ENCODE measurements at regions of chr19 and their contacts with region 1.

Region 1: DNA sequence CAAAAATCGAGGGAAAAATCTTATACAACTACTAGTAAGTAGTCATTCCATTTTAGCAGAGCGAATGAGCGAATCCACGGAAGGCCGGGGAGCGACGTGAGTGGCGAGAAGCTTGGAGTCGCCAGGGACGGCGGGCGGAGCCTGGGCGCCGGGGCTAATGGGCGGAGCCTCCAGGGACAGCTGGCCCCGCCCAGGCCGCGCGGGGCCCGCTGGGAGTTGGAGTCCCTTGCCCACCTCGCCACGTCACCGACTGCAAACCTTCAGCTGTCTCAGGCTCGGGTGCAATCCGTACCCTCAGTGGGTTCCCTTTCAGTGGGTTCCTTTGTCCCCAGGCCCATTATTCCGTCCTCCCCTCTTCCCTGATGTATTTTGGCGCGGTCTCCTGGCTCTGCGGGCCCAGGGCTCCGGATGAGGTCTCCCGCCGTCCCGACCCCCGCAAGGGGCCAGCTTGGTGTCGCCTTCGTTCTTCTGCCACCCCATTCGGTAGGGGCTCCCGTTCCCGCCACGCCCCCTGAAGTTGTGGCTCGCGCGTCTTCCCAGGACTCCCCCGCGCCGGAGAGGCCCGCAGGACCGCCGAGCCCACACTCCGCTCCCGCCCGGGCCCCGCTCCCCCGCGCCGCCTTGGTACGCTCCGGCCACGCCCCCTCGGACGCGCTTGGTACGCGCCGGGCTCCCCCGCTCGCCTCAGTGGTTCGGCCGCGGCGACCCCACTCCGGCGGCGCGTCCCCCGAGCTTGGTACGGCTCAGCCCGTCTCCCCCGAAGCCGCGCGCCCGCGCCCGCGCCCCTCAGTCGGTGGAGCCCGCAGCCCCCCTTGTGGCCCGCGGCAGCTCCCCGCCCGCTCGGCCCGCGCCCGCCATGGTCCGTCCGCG is at the start of gene PTOV1:
- DNase-seq: peak; percentile 73 to 94 (median 86)
- ATAC-seq: peak; percentile 87
- H3K4me3 ChIP-seq: peak within 1 kb of the TSS; percentile 98 to 99
- H3K4me3 Mint-ChIP-seq: peak within 1 kb of the TSS; percentile 93
- H3K27ac ChIP-seq: peak within 1 kb of the TSS; percentile 96 to 99
- H3K27ac Mint-ChIP-seq: peak within 1 kb of the TSS; percentile 96
- H3K4me1 ChIP-seq: peaks cover 30% of the 10 kb centered on the region
- H3K4me1 Mint-ChIP-seq: peaks cover 35% of the 10 kb centered on the region
- H3K27me3 ChIP-seq: no peaks in the 10 kb centered on the region
- H3K27me3 Mint-ChIP-seq: no peaks in the 10 kb centered on the region
- CTCF ChIP-seq: no peak
- total RNA-seq, gene PTOV1: 112 to 116 TPM

Region 2: DNA sequence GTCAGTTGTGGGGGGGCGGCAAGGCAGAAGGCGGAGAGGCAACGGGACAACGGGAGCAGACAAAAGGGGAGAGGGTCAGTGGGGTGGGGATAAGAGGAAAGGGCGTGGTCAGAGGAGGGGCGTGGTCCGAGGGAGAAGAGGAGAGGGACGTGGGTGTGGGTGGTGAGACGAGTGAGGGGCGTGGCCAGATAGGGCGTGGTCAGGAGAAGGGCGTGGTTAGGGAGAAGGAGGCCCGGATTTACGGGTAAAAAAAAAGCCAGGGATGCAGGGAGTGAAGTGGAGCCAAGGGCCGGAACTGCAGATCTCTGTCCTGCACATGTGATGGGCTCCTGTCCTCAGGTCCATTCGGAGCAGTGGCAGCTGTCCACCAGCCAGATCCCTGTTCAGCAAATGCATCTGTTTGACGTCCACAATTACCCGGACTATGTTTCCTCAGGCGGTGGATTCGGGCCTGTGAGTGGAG is 138.3 kb before region 1 on chr19:
- CTCF ChIA-PET with region 1: no interaction called
- POLR2A ChIA-PET with region 1: interaction called, 4 read pairs
- intact Hi-C with region 1: loop called (anchors 1 kb)
- DNase-seq: no peak
- ATAC-seq: no peak
- H3K4me3 ChIP-seq: no peak overlapping the region
- H3K4me3 Mint-ChIP-seq: no peak overlapping the region
- H3K27ac ChIP-seq: no peak overlapping the region
- H3K27ac Mint-ChIP-seq: no peak overlapping the region
- H3K4me1 ChIP-seq: peaks cover 4% of the 10 kb centered on the region
- H3K4me1 Mint-ChIP-seq: peaks cover 3% of the 10 kb centered on the region
- H3K27me3 ChIP-seq: no peaks in the 10 kb centered on the region
- H3K27me3 Mint-ChIP-seq: peaks cover 3% of the 10 kb centered on the region
- CTCF ChIP-seq: no peak

Region 3: DNA sequence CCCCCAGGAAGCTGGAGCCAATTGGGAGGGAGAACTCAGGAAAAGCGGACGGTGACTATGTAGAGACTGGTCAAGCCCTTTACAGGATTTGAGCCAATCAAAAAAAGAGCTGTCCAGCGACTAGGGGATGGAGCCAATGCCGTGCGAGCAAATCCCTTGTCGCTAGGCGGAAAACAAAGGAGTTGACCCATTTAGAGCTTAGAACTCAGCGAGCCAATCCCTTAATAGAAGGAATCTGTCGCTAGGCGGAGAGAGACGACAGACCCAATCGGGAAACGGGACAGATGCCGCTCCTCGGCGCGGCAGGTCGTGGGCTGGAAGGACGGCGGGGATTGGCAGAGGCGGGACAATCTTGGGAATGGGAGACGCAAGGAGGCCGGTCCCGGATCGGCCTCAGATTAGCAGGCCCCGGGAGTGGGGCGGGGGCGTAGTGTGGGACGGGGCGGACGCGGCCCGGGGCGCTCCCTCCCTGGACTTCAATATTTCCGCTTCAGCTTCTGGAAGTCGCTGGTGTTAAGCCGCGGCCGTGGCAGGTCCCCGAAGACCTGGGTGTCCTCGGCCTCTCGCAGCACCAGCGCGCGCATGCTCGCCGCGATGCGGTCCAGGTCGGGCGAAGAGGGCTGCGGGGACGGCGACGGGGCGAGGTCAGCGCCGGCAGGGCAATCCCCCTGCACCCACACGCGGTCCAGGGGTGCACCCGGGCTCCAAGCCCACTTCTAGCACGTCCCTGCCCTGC is 18.9 kb after region 1 on chr19:
- CTCF ChIA-PET with region 1: interaction called, 5 read pairs
- POLR2A ChIA-PET with region 1: interaction called, 48 read pairs
- intact Hi-C with region 1: loop called (anchors 1 kb)
- DNase-seq: peak; percentile 81 to 98 (median 89)
- ATAC-seq: peak; percentile 75
- H3K4me3 ChIP-seq: peak overlapping the region; percentile 73 to 85
- H3K4me3 Mint-ChIP-seq: no peak overlapping the region
- H3K27ac ChIP-seq: peak overlapping the region; percentile 64 to 96
- H3K27ac Mint-ChIP-seq: no peak overlapping the region
- H3K4me1 ChIP-seq: peaks cover 36% of the 10 kb centered on the region
- H3K4me1 Mint-ChIP-seq: peaks cover 41% of the 10 kb centered on the region
- H3K27me3 ChIP-seq: no peaks in the 10 kb centered on the region
- H3K27me3 Mint-ChIP-seq: no peaks in the 10 kb centered on the region
- CTCF ChIP-seq: no peak